Naive thymus-derived CD4-positive, alpha-beta T cell (primary cell): ENCODE measurements at regions of chr2 and their contacts with region 1.

Region 1: GRCh38 chr2:97995734-97996624 is at the start of gene TMEM131:
- DNase-seq: peak; percentile 89 to 98 (median 95)
- ATAC-seq: peak; percentile 93
- H3K4me3 ChIP-seq: peak within 1 kb of the TSS; percentile 90
- H3K4me3 Mint-ChIP-seq: peak within 1 kb of the TSS; percentile 85 to 98 (median 96)
- H3K27ac ChIP-seq: peak within 1 kb of the TSS; percentile 96
- H3K27ac Mint-ChIP-seq: peak within 1 kb of the TSS; percentile 86 to 95 (median 93)
- H3K4me1 ChIP-seq: peaks cover 14 to 17% of the 10 kb centered on the region in 2 donors
- H3K4me1 Mint-ChIP-seq: peaks cover 20 to 40% (median 38%) of the 10 kb centered on the region in 7 donors
- H3K27me3 ChIP-seq: no peaks in the 10 kb centered on the region
- H3K27me3 Mint-ChIP-seq: peaks cover 0 to 4% (median 0%) of the 10 kb centered on the region in 5 donors
- total RNA-seq, gene TMEM131: 39.7 to 46.4 (median 43.6) TPM

Region 2: GRCh38 chr2:97645695-97646629 is 350.0 kb before region 1 on chr2 and contains the start of gene COX5B:
- CTCF ChIA-PET with region 1: no interaction called
- POLR2A ChIA-PET with region 1: no interaction called
- intact Hi-C with region 1: loop called (anchors 2 to 5 kb)
- DNase-seq: peak; percentile 91 to 99 (median 98)
- ATAC-seq: peak; percentile 99
- H3K4me3 ChIP-seq: peak within 1 kb of the TSS; percentile 99
- H3K4me3 Mint-ChIP-seq: peak within 1 kb of the TSS; percentile 86 to 97 (median 94)
- H3K27ac ChIP-seq: peak within 1 kb of the TSS; percentile 97
- H3K27ac Mint-ChIP-seq: peak within 1 kb of the TSS; percentile 91 to 99 (median 98)
- H3K4me1 ChIP-seq: peaks cover 15 to 17% of the 10 kb centered on the region in 2 donors
- H3K4me1 Mint-ChIP-seq: peaks cover 15 to 32% (median 26%) of the 10 kb centered on the region in 7 donors
- H3K27me3 ChIP-seq: no peaks in the 10 kb centered on the region
- H3K27me3 Mint-ChIP-seq: no peaks in the 10 kb centered on the region
- total RNA-seq, gene COX5B: 111 to 213 (median 122) TPM

Region 3: GRCh38 chr2:97806738-97807618 is 189.0 kb before region 1 on chr2:
- CTCF ChIA-PET with region 1: no interaction called
- POLR2A ChIA-PET with region 1: no interaction called
- intact Hi-C with region 1: loop called (anchors 2 to 5 kb)
- DNase-seq: peak; percentile 48 to 75 (median 69)
- ATAC-seq: peak; percentile 97
- H3K4me3 ChIP-seq: no peak overlapping the region
- H3K4me3 Mint-ChIP-seq: no peak overlapping the region
- H3K27ac ChIP-seq: no peak overlapping the region
- H3K27ac Mint-ChIP-seq: no peak overlapping the region
- H3K4me1 ChIP-seq: peaks cover 0 to 6% of the 10 kb centered on the region in 2 donors
- H3K4me1 Mint-ChIP-seq: peaks cover 0 to 8% (median 0%) of the 10 kb centered on the region in 7 donors
- H3K27me3 ChIP-seq: no peaks in the 10 kb centered on the region
- H3K27me3 Mint-ChIP-seq: no peaks in the 10 kb centered on the region

Region 4: DNA sequence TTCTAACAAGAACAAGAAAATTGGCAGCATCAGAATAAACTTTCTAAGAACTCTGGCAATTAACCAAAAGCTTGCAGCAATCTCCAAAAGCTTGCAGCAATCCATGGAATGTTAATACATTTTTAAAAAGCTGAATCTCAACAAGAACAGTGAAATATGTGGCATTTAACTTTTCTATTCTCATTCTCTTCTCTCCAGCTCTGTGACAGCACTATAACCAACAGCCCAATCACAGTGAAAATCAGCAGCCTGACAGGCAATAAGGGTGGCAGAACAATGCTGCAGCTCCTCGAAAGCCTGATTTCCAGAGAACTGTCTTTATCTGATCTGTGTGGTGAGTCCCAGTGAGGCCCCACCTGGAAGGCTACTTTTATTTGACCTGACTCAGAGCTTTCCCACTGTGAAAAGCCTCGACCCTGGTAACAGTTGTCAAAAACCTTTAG is 60.2 kb before region 1 on chr2:
- CTCF ChIA-PET with region 1: no interaction called
- POLR2A ChIA-PET with region 1: no interaction called
- intact Hi-C with region 1: no loop called
- DNase-seq: no peak
- ATAC-seq: no peak
- H3K4me3 ChIP-seq: no peak overlapping the region
- H3K4me3 Mint-ChIP-seq: peak overlapping the region in 4 of 10 donors; percentile 12 to 48 (median 42)
- H3K27ac ChIP-seq: no peak overlapping the region
- H3K27ac Mint-ChIP-seq: peak overlapping the region in 2 of 9 donors; percentile 18 to 45
- H3K4me1 ChIP-seq: peaks cover 0 to 12% of the 10 kb centered on the region in 2 donors
- H3K4me1 Mint-ChIP-seq: peaks cover 35 to 87% (median 85%) of the 10 kb centered on the region in 7 donors
- H3K27me3 ChIP-seq: no peaks in the 10 kb centered on the region
- H3K27me3 Mint-ChIP-seq: no peaks in the 10 kb centered on the region

Region 5: GRCh38 chr2:97950329-97951154 is 45.4 kb before region 1 on chr2:
- CTCF ChIA-PET with region 1: no interaction called
- POLR2A ChIA-PET with region 1: no interaction called
- intact Hi-C with region 1: loop called in 1 of 2 experiments (anchors 5 kb)
- DNase-seq: no peak
- ATAC-seq: no peak
- H3K4me3 ChIP-seq: no peak overlapping the region
- H3K4me3 Mint-ChIP-seq: peak overlapping the region in 5 of 10 donors; percentile 7 to 46 (median 19)
- H3K27ac ChIP-seq: no peak overlapping the region
- H3K27ac Mint-ChIP-seq: peak overlapping the region in 1 of 9 donors; percentile 19
- H3K4me1 ChIP-seq: peaks cover 4 to 7% of the 10 kb centered on the region in 2 donors
- H3K4me1 Mint-ChIP-seq: peaks cover 22 to 90% (median 83%) of the 10 kb centered on the region in 7 donors
- H3K27me3 ChIP-seq: no peaks in the 10 kb centered on the region
- H3K27me3 Mint-ChIP-seq: no peaks in the 10 kb centered on the region

Region 6: DNA sequence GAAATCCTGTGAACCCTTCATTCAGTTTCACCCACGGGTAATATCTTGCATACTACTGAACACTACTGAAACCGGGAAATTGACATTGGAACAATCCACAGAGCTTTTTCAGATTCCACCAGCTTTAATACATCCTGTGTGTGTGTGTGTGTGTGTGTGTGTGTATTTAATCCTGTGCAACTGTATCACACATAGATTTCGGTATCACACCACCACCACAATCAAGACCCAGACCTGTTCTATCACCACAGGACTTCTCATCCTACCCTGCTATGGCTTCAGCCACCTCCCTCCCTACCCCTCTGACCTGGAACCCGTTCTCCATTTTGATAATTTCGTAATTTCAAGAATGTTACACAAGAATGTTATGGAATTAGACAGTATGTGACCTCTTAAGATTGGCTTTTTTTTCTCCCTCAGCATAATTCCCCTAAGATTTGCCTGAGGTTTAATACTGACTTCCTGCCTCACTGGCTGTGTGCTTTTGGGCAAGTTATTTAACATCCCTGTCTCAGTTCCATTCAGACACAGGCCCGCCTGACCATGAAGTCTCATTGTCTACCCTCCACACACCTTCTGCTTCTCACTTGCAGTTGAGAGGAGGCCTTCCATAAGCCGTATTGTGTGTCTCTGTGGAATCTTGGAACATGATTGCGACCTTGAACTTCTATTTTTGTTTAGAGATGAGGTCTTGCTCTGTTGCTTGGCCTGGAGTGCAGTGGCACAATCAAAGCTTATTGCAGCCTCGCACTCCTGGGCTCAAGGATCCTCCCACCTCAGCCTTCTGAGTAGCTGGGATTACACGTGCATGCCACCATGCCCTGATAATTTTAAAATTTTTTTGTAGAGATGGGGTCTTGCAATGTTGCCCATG is 14.1 kb after region 1 on chr2:
- CTCF ChIA-PET with region 1: no interaction called
- POLR2A ChIA-PET with region 1: no interaction called
- intact Hi-C with region 1: no loop called
- DNase-seq: no peak
- ATAC-seq: no peak
- H3K4me3 ChIP-seq: no peak overlapping the region
- H3K4me3 Mint-ChIP-seq: no peak overlapping the region
- H3K27ac ChIP-seq: no peak overlapping the region
- H3K27ac Mint-ChIP-seq: peak overlapping the region in 1 of 9 donors; percentile 41
- H3K4me1 ChIP-seq: no peaks in the 10 kb centered on the region
- H3K4me1 Mint-ChIP-seq: peaks cover 0 to 20% (median 0%) of the 10 kb centered on the region in 7 donors
- H3K27me3 ChIP-seq: no peaks in the 10 kb centered on the region
- H3K27me3 Mint-ChIP-seq: peaks cover 0 to 8% (median 0%) of the 10 kb centered on the region in 5 donors

Region 7: DNA sequence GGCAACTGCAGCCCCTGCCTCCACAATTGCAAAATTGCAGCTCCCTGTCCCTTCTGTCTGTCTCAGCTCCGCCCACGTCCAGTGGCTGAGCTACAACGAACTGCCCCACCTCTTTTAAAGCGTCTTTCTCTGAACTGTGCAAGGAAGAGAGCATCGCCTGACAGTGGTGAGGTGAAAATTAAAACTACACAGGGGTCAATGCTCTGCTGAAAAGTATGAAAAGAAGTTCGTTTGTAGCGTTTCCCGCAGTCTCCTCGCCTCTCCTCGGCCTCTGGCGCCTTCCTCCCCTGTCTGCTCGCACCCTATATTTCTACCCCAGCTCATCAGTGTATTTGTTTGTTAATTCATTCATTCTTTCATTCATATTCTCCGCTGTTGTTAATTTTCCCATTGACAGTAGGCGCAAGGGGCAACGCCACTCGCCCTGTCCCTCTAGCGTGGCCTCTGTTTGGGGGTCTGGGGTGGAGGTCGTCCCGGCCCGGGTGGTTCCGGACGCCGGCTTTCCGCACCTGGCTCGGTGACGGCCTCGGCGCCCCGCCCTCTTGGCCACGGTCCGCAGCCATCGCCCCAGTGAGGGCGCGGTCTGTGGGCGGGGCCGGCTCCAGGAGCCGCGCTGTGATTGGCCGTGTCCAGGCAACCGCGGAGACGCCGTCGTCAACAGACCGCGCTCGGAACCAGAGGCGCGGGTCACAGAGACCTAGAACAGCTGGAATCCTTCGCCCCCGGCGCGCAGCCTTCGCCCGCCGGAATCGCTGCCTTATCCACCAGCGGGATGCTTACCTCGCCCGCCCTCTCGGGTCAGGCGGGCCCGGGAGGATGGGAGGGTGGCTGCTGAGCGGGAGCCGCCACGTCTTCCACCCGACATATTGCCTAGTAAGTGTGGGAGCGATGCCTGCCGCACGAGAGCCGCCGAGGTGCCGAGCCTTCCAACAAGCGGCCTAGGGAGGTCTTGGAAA is 90.8 kb after region 1 on chr2 and contains the start of gene VWA3B:
- CTCF ChIA-PET with region 1: no interaction called
- POLR2A ChIA-PET with region 1: no interaction called
- intact Hi-C with region 1: loop called in 1 of 2 experiments (anchors 2 kb)
- DNase-seq: peak in 1 of 9 donors; percentile 75
- ATAC-seq: peak; percentile 74
- H3K4me3 ChIP-seq: peak within 1 kb of the TSS; percentile 26
- H3K4me3 Mint-ChIP-seq: peak within 1 kb of the TSS; percentile 32 to 83 (median 66)
- H3K27ac ChIP-seq: no peak within 1 kb of the TSS
- H3K27ac Mint-ChIP-seq: peak within 1 kb of the TSS in 1 of 9 donors; percentile 67
- H3K4me1 ChIP-seq: peaks cover 0 to 8% of the 10 kb centered on the region in 2 donors
- H3K4me1 Mint-ChIP-seq: peaks cover 15 to 29% (median 20%) of the 10 kb centered on the region in 7 donors
- H3K27me3 ChIP-seq: peaks cover 3% of the 10 kb centered on the region in 2 donors
- H3K27me3 Mint-ChIP-seq: peaks cover 33 to 58% (median 56%) of the 10 kb centered on the region in 5 donors
- total RNA-seq, gene VWA3B: not detected

Region 8: DNA sequence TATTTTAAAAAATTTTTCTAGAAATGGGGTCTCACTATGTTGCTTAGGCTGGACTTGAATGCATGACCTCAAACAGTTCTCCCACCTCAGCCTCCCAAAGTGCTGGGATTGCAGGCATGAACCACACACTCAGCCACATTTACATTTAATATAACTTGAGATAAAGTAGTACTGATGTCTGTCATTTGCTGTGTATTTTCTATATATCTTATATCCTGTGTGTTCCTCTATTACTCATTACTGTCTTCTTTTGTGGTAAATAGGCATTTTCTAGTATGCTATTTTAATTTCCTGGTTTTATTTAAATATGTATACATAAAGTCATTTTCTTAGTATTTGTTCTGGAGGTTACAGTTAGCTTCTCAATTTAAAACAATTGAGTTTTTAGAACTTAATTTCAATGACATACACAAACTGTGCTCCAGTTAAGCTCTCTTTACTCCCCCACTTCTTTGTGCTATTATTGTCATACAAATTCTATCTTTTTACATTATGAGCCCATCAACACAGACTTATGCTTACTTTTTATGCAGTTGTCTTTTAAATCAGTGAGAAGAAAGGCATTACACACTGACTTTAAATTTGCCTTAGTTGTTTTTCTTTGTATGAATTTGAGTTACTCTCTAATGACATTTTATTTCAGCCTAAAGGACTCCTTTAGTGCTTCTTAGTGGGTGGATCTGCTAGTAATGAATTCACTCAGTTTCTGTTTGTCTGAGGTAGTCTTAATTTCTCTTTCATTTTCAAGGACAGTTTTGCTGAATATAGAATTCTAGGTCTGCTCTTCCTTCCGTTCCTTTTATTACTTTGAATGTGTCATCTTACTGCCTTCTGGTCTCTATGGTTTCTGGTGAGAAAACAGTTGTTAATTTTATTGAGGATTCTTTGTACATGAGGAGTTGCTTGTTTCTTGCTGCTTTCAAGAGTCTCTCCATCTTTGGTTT is 442.5 kb after region 1 on chr2:
- CTCF ChIA-PET with region 1: no interaction called
- POLR2A ChIA-PET with region 1: no interaction called
- intact Hi-C with region 1: loop called in 1 of 2 experiments (anchors 5 kb)
- DNase-seq: peak in 1 of 9 donors; percentile 40
- ATAC-seq: peak; percentile 82
- H3K4me3 ChIP-seq: no peak overlapping the region
- H3K4me3 Mint-ChIP-seq: peak overlapping the region in 1 of 10 donors; percentile 74
- H3K27ac ChIP-seq: no peak overlapping the region
- H3K27ac Mint-ChIP-seq: peak overlapping the region in 6 of 9 donors; percentile 1 to 92 (median 8)
- H3K4me1 ChIP-seq: no peaks in the 10 kb centered on the region
- H3K4me1 Mint-ChIP-seq: peaks cover 0 to 35% (median 5%) of the 10 kb centered on the region in 7 donors
- H3K27me3 ChIP-seq: no peaks in the 10 kb centered on the region
- H3K27me3 Mint-ChIP-seq: no peaks in the 10 kb centered on the region